ENCODE measurements at regions of chr21 and their contacts with region 1.

Region 1: DNA sequence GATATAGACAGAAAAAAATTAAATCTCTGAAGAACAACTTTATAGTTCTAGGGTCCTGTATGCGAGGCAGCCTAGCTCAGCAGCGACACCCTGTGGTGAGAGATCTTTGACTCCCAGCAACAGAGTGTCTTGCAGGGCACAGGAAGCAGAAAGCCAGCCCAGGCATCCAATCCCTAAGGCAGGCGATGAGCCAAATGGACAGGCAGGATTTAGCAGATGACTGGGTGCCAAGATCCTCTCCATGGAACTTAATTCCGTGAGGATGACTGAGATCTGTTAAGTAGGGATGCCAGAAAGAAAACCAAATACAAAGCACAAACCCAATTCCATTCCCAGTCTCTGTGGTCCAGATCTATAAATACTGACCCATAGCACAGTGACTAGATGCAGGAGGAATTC is 38.8 kb downstream of the HLCS start:
- DNase-seq: peak; percentile 56 to 82 (median 64)
- ATAC-seq: peak; percentile 59
- H3K4me3 ChIP-seq: no peak overlapping the region
- H3K4me3 Mint-ChIP-seq: no peak overlapping the region
- H3K27ac ChIP-seq: no peak overlapping the region
- H3K27ac Mint-ChIP-seq: no peak overlapping the region
- H3K4me1 ChIP-seq: no peaks in the 10 kb centered on the region
- H3K4me1 Mint-ChIP-seq: peaks cover 8% of the 10 kb centered on the region
- H3K27me3 ChIP-seq: no peaks in the 10 kb centered on the region
- H3K27me3 Mint-ChIP-seq: no peaks in the 10 kb centered on the region
- CTCF ChIP-seq: peak; percentile 89

Region 2: GRCh38 chr21:36141513-36141925 is 786.2 kb before region 1 on chr21:
- CTCF ChIA-PET with region 1: no interaction called
- POLR2A ChIA-PET with region 1: no interaction called
- intact Hi-C with region 1: loop called in 1 of 2 experiments (anchors 5 kb)
- DNase-seq: peak; percentile 68 to 96 (median 82)
- ATAC-seq: peak; percentile 89
- H3K4me3 ChIP-seq: no peak overlapping the region
- H3K4me3 Mint-ChIP-seq: peak overlapping the region; percentile 0
- H3K27ac ChIP-seq: peak overlapping the region; percentile 19 to 38
- H3K27ac Mint-ChIP-seq: peak overlapping the region; percentile 66
- H3K4me1 ChIP-seq: peaks cover 33% of the 10 kb centered on the region
- H3K4me1 Mint-ChIP-seq: peaks cover 24% of the 10 kb centered on the region
- H3K27me3 ChIP-seq: no peaks in the 10 kb centered on the region
- H3K27me3 Mint-ChIP-seq: no peaks in the 10 kb centered on the region
- CTCF ChIP-seq: peak; percentile 84

Region 3: GRCh38 chr21:36429947-36430546 is 497.7 kb before region 1 on chr21:
- CTCF ChIA-PET with region 1: no interaction called
- POLR2A ChIA-PET with region 1: no interaction called
- intact Hi-C with region 1: loop called in 1 of 2 experiments (anchors 10 kb)
- DNase-seq: peak; percentile 7 to 82 (median 58)
- ATAC-seq: peak; percentile 89
- H3K4me3 ChIP-seq: peak overlapping the region; percentile 45
- H3K4me3 Mint-ChIP-seq: peak overlapping the region; percentile 77
- H3K27ac ChIP-seq: no peak overlapping the region
- H3K27ac Mint-ChIP-seq: no peak overlapping the region
- H3K4me1 ChIP-seq: peaks cover 8% of the 10 kb centered on the region
- H3K4me1 Mint-ChIP-seq: peaks cover 12% of the 10 kb centered on the region
- H3K27me3 ChIP-seq: no peaks in the 10 kb centered on the region
- H3K27me3 Mint-ChIP-seq: peaks cover 36% of the 10 kb centered on the region
- CTCF ChIP-seq: no peak

Region 4: DNA sequence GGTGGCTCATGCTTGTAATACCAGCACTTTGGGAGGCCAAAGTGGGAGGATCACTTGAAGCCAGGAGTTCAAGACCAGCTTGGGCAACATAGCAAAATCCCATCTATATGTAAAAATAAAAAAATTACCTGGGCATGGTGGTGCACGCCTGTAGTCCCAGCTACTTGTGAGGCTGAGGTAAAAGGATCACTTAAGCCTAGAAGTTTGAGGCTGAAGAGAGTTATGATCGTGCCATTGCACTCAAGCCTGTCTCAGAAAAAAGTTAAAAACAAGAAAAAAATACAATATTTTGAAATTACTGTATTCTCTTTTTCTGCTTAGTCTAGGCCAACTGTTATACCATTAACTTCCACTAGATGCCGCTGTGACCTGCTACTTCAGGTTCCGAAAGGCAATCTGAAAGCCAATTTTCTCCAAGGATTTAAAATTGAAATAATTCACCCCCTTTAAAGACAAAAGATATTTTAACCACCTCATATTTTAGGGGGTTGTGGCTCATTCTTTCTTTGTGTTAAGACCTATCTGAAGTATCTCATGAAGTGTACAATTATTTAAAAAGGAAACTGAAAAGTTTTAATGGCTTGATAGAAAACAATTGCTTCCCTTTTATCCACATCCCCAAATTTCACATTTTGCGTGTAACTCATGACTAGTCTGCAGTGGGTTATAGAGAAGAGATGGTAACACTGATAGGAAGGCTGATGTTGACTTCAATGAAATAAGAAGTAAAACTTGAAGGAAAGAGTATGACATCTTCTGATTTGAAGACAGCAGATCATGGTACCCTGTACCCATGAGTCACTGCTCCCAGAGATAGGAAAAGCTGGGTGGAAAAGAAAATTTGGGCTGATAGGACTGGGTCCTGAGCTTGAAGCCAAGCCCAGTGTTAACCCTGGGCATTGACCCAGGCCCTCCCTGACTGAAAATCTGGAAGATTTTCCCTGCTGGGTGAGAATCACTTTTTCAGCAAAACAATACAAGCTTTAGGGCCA is 423.4 kb before region 1 on chr21:
- CTCF ChIA-PET with region 1: interaction called, 3 read pairs
- POLR2A ChIA-PET with region 1: no interaction called
- intact Hi-C with region 1: loop called in 1 of 2 experiments (anchors 1 kb)
- DNase-seq: peak in 10 of 14 experiments; percentile 5 to 74 (median 24)
- ATAC-seq: no peak
- H3K4me3 ChIP-seq: no peak overlapping the region
- H3K4me3 Mint-ChIP-seq: no peak overlapping the region
- H3K27ac ChIP-seq: no peak overlapping the region
- H3K27ac Mint-ChIP-seq: no peak overlapping the region
- H3K4me1 ChIP-seq: no peaks in the 10 kb centered on the region
- H3K4me1 Mint-ChIP-seq: no peaks in the 10 kb centered on the region
- H3K27me3 ChIP-seq: no peaks in the 10 kb centered on the region
- H3K27me3 Mint-ChIP-seq: peaks cover 4% of the 10 kb centered on the region
- CTCF ChIP-seq: peak; percentile 99

Region 5: GRCh38 chr21:36589355-36589971 is 338.3 kb before region 1 on chr21:
- CTCF ChIA-PET with region 1: no interaction called
- POLR2A ChIA-PET with region 1: no interaction called
- intact Hi-C with region 1: loop called (anchors 1 kb)
- DNase-seq: peak in 3 of 14 experiments; percentile 5 to 16 (median 7)
- ATAC-seq: no peak
- H3K4me3 ChIP-seq: no peak overlapping the region
- H3K4me3 Mint-ChIP-seq: no peak overlapping the region
- H3K27ac ChIP-seq: no peak overlapping the region
- H3K27ac Mint-ChIP-seq: no peak overlapping the region
- H3K4me1 ChIP-seq: no peaks in the 10 kb centered on the region
- H3K4me1 Mint-ChIP-seq: peaks cover 6% of the 10 kb centered on the region
- H3K27me3 ChIP-seq: peaks cover 0 to 2% of the 10 kb centered on the region in 2 experiments
- H3K27me3 Mint-ChIP-seq: no peaks in the 10 kb centered on the region
- CTCF ChIP-seq: no peak

Region 6: DNA sequence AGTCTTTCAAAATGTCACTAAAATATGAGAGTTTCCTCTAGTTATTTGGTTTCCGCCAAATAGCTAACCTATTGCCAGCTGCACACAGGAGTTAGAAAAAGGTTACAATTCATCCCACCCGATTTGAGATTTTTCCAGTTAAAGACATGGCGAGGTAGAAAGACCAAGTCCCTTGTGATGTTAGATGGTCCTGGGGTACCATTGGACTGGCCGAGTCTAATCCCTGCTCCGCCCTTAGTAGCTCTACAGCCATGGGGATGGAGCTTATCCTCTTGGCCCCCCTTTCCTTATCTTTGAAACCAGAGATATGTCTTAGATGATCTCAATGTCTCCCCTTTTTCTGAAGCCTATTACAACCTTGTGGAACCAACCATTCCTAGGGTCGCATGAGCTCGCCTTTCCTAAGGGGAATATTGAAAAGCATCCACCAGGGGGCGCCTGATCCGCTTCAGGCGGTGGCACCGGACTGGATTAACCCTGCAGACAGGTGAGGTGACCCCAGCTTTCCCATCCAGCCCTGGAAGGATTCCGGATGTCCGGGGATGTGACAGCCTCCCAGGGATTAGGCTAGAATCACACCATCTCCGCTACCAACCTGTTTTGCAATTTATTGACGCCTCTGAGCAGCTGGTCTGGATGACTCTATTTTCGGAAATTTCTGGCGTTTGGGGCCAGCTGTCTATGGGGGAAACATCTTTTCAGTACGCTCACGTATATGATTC is 297.1 kb before region 1 on chr21:
- CTCF ChIA-PET with region 1: no interaction called
- POLR2A ChIA-PET with region 1: no interaction called
- intact Hi-C with region 1: loop called (anchors 5 kb)
- DNase-seq: peak; percentile 27 to 73 (median 46)
- ATAC-seq: no peak
- H3K4me3 ChIP-seq: no peak overlapping the region
- H3K4me3 Mint-ChIP-seq: no peak overlapping the region
- H3K27ac ChIP-seq: no peak overlapping the region
- H3K27ac Mint-ChIP-seq: no peak overlapping the region
- H3K4me1 ChIP-seq: no peaks in the 10 kb centered on the region
- H3K4me1 Mint-ChIP-seq: no peaks in the 10 kb centered on the region
- H3K27me3 ChIP-seq: no peaks in the 10 kb centered on the region
- H3K27me3 Mint-ChIP-seq: peaks cover 5% of the 10 kb centered on the region
- CTCF ChIP-seq: peak; percentile 76